Keratinocyte (primary cell): ENCODE measurements at regions of chrX and their contacts with region 1.

Region 1: GRCh38 chrX:18424482-18425198 is 768 bp upstream of the CDKL5 start:
- DNase-seq: no peak
- H3K4me3 ChIP-seq: peak overlapping the region; percentile 67 to 78 (median 73)
- H3K27ac ChIP-seq: no peak overlapping the region
- H3K4me1 ChIP-seq: no peaks in the 10 kb centered on the region
- H3K27me3 ChIP-seq: no peaks in the 10 kb centered on the region
- CTCF ChIP-seq: no peak

Region 2: GRCh38 chrX:18272222-18272621 is 152.4 kb before region 1 on chrX:
- dilution Hi-C with region 1: no loop called
- DNase-seq: no peak
- H3K4me3 ChIP-seq: no peak overlapping the region
- H3K27ac ChIP-seq: no peak overlapping the region
- H3K4me1 ChIP-seq: no peaks in the 10 kb centered on the region
- H3K27me3 ChIP-seq: no peaks in the 10 kb centered on the region
- CTCF ChIP-seq: no peak

Region 3: DNA sequence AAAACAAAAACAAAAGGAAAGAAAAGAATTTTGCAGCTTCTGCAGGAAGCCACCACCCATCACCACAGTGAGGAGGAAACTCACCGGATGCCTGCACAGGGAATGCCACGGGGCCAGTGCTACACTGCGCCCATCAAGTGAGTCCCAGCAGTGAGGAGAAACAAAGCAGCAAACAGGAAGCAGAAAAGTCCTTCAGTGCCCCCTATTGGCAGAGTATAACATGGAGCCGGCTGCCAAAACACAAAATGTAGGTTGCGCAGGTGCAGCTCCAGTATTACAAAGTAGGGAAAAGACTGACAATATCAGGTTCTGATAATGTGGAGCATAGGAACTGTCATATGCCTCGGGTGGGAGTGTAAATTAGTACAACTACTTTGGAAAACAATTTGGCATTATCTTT is 46.8 kb before region 1 on chrX:
- dilution Hi-C with region 1: no loop called
- DNase-seq: no peak
- H3K4me3 ChIP-seq: no peak overlapping the region
- H3K27ac ChIP-seq: no peak overlapping the region
- H3K4me1 ChIP-seq: no peaks in the 10 kb centered on the region
- H3K27me3 ChIP-seq: no peaks in the 10 kb centered on the region
- CTCF ChIP-seq: peak; percentile 38 to 59 (median 57)

Region 4: GRCh38 chrX:19343535-19344408 is 919.1 kb after region 1 on chrX and contains the start of gene PDHA1:
- dilution Hi-C with region 1: loop called (anchors 25 kb)
- DNase-seq: peak; percentile 41
- H3K4me3 ChIP-seq: peak within 1 kb of the TSS; percentile 68 to 73 (median 69)
- H3K27ac ChIP-seq: peak within 1 kb of the TSS; percentile 69
- H3K4me1 ChIP-seq: peaks cover 3% of the 10 kb centered on the region
- H3K27me3 ChIP-seq: no peaks in the 10 kb centered on the region
- CTCF ChIP-seq: no peak
- polyA plus RNA-seq, gene PDHA1: 163 to 236 TPM (median 202 TPM) in 3 replicates